PC-3 (cell line): ENCODE measurements at regions of chr10 and their contacts with region 1.

Region 1: GRCh38 chr10:88990384-88991160 is at the start of gene FAS:
- DNase-seq: peak; percentile 66
- ATAC-seq: peak; percentile 79
- H3K4me3 ChIP-seq: peak within 1 kb of the TSS; percentile 81
- H3K27ac ChIP-seq: peak within 1 kb of the TSS; percentile 45
- H3K4me1 ChIP-seq: peaks cover 28% of the 10 kb centered on the region
- H3K27me3 ChIP-seq: no peaks in the 10 kb centered on the region
- CTCF ChIP-seq: no peak
- total RNA-seq, gene FAS: 3.5 and 4.8 TPM in 2 replicates

Region 2: DNA sequence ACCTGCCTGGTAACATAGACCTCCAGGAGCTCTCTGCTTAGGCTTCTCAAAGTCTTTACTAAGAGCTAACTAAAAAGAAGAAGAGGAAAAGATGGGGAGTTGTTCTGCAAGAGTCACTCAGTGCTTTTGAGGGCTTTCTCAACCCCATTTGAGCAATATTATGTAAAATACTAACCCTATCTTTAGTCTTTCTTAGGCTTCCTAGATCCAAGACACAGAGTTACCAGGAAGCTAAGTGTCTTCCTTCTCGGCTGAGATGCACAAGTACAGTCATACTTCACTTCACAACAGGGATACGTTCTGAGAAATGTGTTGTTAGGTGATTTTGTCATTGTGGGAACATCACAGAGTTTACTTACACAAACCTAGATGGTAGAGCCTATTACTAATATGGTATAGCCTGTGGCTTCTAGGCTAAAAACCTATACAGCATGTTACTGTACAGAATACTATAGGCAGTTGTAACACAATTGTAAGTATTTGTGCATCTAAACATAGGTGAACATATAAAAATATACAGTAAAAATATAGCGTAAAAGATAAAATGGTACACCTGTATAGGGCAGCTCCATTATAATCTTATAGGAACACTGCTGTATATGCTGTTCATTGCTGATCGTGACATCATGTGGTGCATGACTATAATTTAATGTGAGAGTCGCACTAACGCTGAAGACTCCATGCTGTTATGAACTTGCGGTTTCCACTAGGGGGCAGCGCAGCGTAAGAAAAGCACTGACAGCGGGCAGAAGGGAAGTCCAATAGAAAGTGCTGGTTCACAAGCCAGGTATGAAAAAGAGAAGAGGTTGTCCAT is 155.3 kb before region 1 on chr10:
- CTCF ChIA-PET with region 1: no interaction called
- POLR2A ChIA-PET with region 1: no interaction called
- intact Hi-C with region 1: loop called (anchors 5 kb)
- DNase-seq: peak; percentile 83
- ATAC-seq: peak; percentile 96
- H3K4me3 ChIP-seq: no peak overlapping the region
- H3K27ac ChIP-seq: no peak overlapping the region
- H3K4me1 ChIP-seq: no peaks in the 10 kb centered on the region
- H3K27me3 ChIP-seq: no peaks in the 10 kb centered on the region
- CTCF ChIP-seq: peak; percentile 88

Region 3: DNA sequence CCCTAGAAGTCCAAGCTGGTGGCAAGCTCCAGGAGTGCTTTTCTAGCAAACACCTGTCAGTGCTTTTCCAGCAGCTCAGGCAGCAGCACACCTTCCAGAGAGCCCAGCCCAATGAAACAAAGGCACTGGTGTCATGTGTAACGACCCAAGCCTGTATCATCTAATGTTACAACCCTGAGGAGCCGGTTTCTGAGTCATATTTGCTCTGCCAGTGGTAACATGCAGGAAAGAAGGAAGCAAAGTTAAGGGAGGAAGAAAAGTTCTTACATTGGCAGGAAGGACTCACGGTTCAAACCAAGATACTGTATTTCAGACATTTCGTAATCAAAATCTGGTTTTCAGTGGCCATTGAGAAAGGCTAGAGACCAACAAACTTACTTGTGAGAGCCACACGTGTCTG is 138.9 kb before region 1 on chr10 and contains the start of gene ANKRD22:
- CTCF ChIA-PET with region 1: no interaction called
- POLR2A ChIA-PET with region 1: no interaction called
- intact Hi-C with region 1: loop called (anchors 2 kb)
- DNase-seq: peak; percentile 95
- ATAC-seq: peak; percentile 93
- H3K4me3 ChIP-seq: peak within 1 kb of the TSS; percentile 60
- H3K27ac ChIP-seq: peak within 1 kb of the TSS; percentile 73
- H3K4me1 ChIP-seq: peaks cover 46% of the 10 kb centered on the region
- H3K27me3 ChIP-seq: no peaks in the 10 kb centered on the region
- CTCF ChIP-seq: no peak
- total RNA-seq, gene ANKRD22: 5.0 and 6.2 TPM in 2 replicates

Region 4: DNA sequence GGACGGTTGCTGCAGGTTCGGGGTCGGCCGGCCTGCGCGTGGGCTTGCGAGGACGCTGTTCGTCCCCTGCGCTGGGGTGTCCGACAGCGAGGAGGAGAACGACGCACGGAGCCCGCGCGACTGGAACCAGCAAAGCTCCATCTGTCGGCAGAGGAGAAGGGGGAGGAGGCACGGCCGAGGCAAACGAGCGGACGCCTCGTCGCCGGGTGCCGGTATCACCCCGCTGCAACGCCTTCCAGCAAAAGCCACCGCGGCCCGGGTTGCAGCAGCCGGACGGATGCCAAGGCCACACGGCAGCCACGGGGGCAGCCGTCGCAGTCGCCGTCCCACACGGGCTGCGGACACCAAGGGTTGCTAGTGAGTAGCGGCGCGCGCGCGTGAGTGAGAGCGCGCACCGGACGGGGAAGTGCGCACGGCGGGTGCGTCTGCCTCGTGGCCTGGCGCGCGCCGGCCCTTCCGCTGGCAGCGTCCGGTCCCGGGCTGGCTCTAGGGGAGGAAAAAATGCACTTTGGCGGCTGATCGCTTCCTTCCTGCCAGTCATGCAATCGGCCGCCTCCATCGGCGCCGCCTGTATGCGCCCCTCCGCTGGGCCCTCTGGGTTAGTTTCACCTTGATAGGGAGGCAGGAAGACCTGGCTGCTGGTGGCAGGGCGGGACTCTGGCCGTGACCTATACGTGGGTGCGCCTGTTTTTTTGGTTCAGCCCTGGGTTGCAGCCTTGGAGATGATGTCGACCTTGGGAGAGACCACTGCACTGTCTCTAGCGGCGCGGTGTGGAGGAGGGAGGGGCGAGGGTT is 110.1 kb before region 1 on chr10:
- CTCF ChIA-PET with region 1: no interaction called
- POLR2A ChIA-PET with region 1: interaction called, 6 read pairs
- intact Hi-C with region 1: loop called (anchors 5 kb)
- DNase-seq: peak; percentile 79
- ATAC-seq: peak; percentile 75
- H3K4me3 ChIP-seq: peak overlapping the region; percentile 87
- H3K27ac ChIP-seq: peak overlapping the region; percentile 57
- H3K4me1 ChIP-seq: peaks cover 37% of the 10 kb centered on the region
- H3K27me3 ChIP-seq: no peaks in the 10 kb centered on the region
- CTCF ChIP-seq: no peak

Region 5: DNA sequence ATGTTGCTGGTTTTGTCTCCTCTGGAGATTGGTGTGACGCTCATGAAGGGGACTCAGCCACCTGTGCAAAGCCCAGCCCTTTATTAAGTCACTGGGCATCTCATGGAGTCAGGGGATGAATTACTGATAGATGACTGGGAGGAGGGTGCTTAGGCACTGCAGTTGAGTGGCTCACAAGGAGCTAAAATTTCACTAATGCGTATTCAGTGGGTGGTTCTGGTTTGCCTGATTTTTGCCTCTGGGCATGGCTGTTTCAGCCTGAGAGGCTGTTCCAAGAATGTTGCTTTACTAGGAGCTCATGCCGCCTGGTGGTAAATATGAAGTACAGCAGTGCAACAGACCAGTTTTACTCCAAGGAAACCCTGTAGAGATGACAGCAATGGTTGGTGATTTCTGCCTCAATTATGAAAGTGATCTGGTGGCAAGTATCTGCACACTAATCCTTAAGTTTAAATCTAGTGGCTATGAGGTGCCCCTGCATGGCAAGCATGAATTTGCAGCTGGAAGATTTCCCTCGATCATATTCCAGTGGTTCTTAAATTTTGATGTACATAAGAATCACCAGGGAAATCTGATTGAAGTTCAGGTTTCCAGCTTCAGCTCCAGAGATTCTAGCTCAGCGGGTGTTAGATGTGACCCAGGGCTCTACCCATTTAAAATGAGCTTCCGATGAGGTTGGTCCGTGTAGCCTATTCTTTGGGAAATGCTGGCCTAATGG is 57.9 kb before region 1 on chr10:
- CTCF ChIA-PET with region 1: interaction called, 6 read pairs
- POLR2A ChIA-PET with region 1: no interaction called
- intact Hi-C with region 1: loop called (anchors 1 kb)
- DNase-seq: peak; percentile 86
- ATAC-seq: peak; percentile 76
- H3K4me3 ChIP-seq: no peak overlapping the region
- H3K27ac ChIP-seq: peak overlapping the region; percentile 15; the same call in 1 of the 2 replicates
- H3K4me1 ChIP-seq: peaks cover 13% of the 10 kb centered on the region
- H3K27me3 ChIP-seq: no peaks in the 10 kb centered on the region
- CTCF ChIP-seq: peak; percentile 81

Region 6: GRCh38 chr10:88974446-88975376 is 15.9 kb before region 1 on chr10:
- CTCF ChIA-PET with region 1: interaction called, 3 read pairs
- POLR2A ChIA-PET with region 1: no interaction called
- intact Hi-C with region 1: loop called (anchors 2 kb)
- DNase-seq: peak; percentile 27
- ATAC-seq: peak; percentile 82
- H3K4me3 ChIP-seq: peak overlapping the region; percentile 74
- H3K27ac ChIP-seq: no peak overlapping the region
- H3K4me1 ChIP-seq: no peaks in the 10 kb centered on the region
- H3K27me3 ChIP-seq: no peaks in the 10 kb centered on the region
- CTCF ChIP-seq: no peak

Region 7: GRCh38 chr10:89100680-89101079 is 110.1 kb after region 1 on chr10:
- CTCF ChIA-PET with region 1: no interaction called
- POLR2A ChIA-PET with region 1: no interaction called
- intact Hi-C with region 1: no loop called
- DNase-seq: no peak
- ATAC-seq: no peak
- H3K4me3 ChIP-seq: no peak overlapping the region
- H3K27ac ChIP-seq: no peak overlapping the region
- H3K4me1 ChIP-seq: peaks cover 6% of the 10 kb centered on the region; the same call in 1 of the 2 replicates
- H3K27me3 ChIP-seq: no peaks in the 10 kb centered on the region
- CTCF ChIP-seq: no peak

Region 8: GRCh38 chr10:89158446-89158845 is 167.9 kb after region 1 on chr10:
- CTCF ChIA-PET with region 1: no interaction called
- POLR2A ChIA-PET with region 1: no interaction called
- intact Hi-C with region 1: no loop called
- DNase-seq: no peak
- ATAC-seq: no peak
- H3K4me3 ChIP-seq: no peak overlapping the region
- H3K27ac ChIP-seq: no peak overlapping the region
- H3K4me1 ChIP-seq: no peaks in the 10 kb centered on the region
- H3K27me3 ChIP-seq: 0 out of 2 replicates have a peak, but pooled peaks cover 3% of the 10 kb centered on the region
- CTCF ChIP-seq: no peak